PC-9 (cell line): ENCODE measurements at regions of chr21 and their contacts with region 1.

Region 1: DNA sequence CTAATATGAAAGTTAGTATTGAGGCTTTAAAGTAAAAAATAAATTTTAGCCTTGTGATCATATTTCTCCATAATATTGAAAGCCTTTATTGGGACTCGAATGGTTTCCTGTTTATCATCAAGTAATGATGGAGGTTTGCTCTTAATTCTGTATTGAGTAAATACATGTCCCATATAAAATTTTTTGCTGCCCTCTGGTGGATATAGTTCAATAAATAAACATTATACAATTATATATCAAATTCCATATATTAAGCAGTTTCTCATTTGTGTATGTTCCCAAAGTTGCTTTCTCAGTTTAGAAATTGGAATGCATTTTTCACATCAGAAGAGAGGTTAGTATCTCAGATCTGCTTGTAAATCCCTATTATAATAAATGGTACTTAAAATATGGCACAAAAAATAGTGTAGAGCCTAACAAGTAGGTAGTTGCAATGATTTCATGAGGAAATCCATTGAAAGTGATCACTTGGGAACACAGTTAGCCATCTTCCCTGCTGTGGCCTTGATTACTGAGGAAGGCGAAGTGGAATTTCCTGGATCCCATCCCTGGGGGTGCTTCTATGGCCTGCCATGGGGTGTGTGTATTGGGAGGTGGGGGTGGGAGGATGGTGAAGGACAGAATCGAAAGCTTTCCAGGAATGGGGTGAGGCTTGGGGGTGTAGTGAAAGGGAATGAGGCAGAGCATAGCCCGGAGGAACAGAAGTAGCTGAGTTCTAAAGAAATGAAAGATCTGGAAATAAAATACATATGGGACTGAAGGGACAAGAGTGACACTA is 84.1 kb upstream of the C21orf91 start:
- DNase-seq: peak in 1 of 2 experiments; percentile 49
- H3K4me3 ChIP-seq: no peak overlapping the region
- H3K27ac ChIP-seq: no peak overlapping the region
- H3K4me1 ChIP-seq: peaks cover 7% of the 10 kb centered on the region
- H3K27me3 ChIP-seq: no peaks in the 10 kb centered on the region
- CTCF ChIP-seq: peak; percentile 58

Region 2: DNA sequence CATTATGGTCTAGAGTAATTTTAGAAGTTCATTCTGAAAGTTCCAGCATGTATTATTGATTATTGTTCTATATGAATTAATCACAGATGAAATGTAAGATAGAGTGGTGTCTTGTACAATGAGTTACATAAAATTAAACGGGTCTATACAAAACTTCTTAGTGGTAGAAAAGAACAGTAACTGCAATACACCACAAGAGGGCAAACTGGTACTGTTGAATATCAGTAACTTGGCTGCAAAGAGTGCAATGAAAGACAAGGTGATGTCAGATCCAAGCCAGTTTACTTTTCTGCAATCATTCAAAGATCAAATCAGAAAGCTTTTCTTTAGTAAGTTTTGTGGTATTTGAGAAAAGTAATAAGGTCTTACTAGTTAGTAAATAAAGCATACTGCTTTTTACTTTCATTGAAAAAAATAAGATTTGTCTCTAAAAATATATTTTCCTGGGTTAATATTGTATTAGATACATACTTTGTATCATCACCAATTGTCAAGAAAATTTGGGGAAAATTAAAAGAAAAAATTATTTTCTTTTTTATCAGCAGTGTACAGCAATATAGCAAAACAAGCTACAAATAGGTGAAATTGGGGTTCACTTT is 224.1 kb before region 1 on chr21:
- CTCF ChIA-PET with region 1: no interaction called
- POLR2A ChIA-PET with region 1: no interaction called
- intact Hi-C with region 1: loop called (anchors 1 kb)
- DNase-seq: peak in 1 of 2 experiments; percentile 39
- H3K4me3 ChIP-seq: no peak overlapping the region
- H3K27ac ChIP-seq: no peak overlapping the region
- H3K4me1 ChIP-seq: no peaks in the 10 kb centered on the region
- H3K27me3 ChIP-seq: no peaks in the 10 kb centered on the region
- CTCF ChIP-seq: peak; percentile 87

Region 3: DNA sequence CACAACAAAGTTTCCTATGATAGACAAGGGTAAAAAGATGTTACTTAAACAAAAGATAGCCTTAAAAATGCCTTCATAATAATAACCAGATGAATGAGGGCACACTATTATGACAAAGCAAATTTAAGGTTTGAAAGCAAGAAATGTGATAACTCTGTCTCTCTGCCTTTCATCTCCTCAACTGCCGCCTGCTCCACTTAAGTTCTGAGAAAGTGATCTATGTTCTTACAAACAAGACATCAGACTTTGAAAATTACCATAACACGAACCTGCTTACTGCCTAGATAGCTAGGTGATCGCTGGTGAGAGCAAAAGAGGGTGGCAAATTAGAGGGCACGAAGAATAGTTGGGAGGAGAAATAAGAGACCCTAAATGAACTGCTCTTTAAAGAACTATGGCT is 97.3 kb before region 1 on chr21:
- CTCF ChIA-PET with region 1: interaction called, 21 read pairs
- POLR2A ChIA-PET with region 1: no interaction called
- intact Hi-C with region 1: no loop called
- DNase-seq: no peak
- H3K4me3 ChIP-seq: no peak overlapping the region
- H3K27ac ChIP-seq: no peak overlapping the region
- H3K4me1 ChIP-seq: no peaks in the 10 kb centered on the region
- H3K27me3 ChIP-seq: no peaks in the 10 kb centered on the region
- CTCF ChIP-seq: no peak